Natural killer cell (primary cell): ENCODE measurements at regions of chr2 and their contacts with region 1.

Region 1: DNA sequence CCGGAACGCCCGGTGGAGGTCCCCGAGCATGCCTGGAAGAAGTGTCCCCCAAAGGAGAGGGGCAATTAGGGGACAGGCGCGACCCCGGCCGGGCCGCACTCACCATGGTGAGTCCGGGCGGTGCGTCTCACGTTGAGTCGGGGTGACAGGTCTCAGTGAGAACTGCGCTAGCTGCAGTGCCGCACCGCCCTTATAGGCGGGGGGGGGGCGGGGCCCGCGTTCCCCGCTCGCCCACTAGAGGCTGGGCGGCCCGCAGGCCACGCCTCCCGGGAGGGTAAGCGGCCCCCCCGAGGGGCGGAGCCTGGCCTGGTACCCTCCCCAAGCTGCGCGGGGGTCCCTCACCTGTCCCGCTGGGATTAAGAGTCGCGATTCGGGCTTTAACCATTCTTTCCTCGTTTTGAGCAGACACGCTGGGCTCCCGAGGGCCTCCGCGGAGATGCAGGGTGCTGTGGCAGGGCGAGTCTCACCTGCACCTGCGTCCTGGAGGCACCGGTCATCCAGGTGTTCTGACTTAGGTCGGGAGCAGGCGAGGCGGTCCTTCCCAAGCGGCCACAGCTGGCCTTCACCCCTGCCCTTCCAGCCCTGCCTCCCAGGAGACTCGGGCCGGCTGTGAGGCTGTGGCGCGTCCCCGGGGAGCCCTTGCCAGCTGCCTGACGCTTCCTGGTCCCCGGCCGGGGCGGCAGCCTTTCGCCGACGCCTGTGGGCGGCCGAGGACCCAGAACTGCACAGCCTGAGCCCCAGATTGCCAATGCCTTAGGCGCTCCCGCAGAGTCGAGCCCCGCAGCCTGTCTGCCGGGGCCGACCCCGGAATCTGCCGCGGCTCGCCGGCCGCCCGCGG is at the start of gene TUBA4A:
- DNase-seq: peak; percentile 91 to 95
- ATAC-seq: peak; percentile 78 to 92 (median 86)
- H3K4me3 ChIP-seq: peak within 1 kb of the TSS; percentile 93
- H3K4me3 Mint-ChIP-seq: peak within 1 kb of the TSS; percentile 88
- H3K27ac ChIP-seq: peak within 1 kb of the TSS; percentile 97
- H3K27ac Mint-ChIP-seq: peak within 1 kb of the TSS; percentile 86 to 98
- H3K4me1 ChIP-seq: peaks cover 50% of the 10 kb centered on the region
- H3K4me1 Mint-ChIP-seq: peaks cover 29 to 48% of the 10 kb centered on the region in 2 donors
- H3K27me3 ChIP-seq: no peaks in the 10 kb centered on the region
- H3K27me3 Mint-ChIP-seq: peaks cover 0 to 3% of the 10 kb centered on the region in 2 donors
- CTCF ChIP-seq: no peak
- total RNA-seq, gene TUBA4A: 145 to 188 (median 146) TPM

Region 2: DNA sequence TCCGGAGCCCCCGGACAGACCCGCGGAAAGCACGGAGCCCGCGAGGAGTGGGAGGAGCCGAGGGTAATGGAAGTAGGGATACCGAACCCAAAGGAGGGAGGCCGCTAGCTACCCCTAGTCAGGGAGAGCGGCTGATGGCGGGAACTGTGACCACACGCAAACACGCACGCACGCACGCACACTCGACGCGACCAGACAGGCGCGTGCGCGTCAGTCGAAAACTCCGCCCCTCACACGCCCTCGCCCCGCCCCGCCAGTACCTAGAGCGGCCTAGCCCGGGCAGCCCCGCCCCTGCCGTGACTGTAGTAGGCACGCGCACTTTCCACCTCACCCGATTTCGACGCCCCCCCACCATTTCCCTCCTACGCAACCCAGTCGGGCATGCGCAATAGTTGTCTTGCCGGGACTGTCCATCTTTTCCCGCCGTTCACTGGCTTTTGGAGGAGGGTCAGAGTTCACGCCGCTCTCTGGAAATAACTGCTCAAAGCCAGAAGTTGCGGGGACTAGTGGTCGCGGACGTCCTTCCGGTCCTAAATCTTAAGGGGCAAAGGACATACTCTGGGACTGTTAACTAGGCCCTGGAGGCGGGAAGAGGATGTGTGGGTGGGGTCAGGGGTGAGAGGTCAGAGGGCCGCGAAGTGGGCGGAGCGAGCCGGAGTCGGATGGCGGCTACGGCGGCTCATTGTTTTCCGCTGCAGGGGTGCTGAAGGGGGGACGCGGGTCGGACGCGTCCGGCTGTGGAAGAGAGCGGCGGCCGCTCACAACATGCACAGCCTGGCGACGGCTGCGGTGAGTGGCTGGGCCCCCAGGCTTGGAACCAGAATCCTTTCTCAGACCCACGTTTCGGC is 685.6 kb before region 1 on chr2 and contains the starts of genes CNOT9 and USP37:
- intact Hi-C with region 1: loop called (anchors 5 kb)
- DNase-seq: peak; percentile 99 to 100
- ATAC-seq: peak; percentile 86 to 97 (median 89)
- H3K4me3 ChIP-seq: peak within 1 kb of the TSS; percentile 67
- H3K4me3 Mint-ChIP-seq: peak within 1 kb of the TSS; percentile 99
- H3K27ac ChIP-seq: peak within 1 kb of the TSS; percentile 98
- H3K27ac Mint-ChIP-seq: peak within 1 kb of the TSS; percentile 92 to 95
- H3K4me1 ChIP-seq: peaks cover 27% of the 10 kb centered on the region
- H3K4me1 Mint-ChIP-seq: peaks cover 42 to 67% of the 10 kb centered on the region in 2 donors
- H3K27me3 ChIP-seq: no peaks in the 10 kb centered on the region
- H3K27me3 Mint-ChIP-seq: no peaks in the 10 kb centered on the region
- CTCF ChIP-seq: no peak
- total RNA-seq, gene CNOT9: 61.4 to 66.7 (median 66.3) TPM
- total RNA-seq, gene USP37: 18.3 to 26.2 (median 21.6) TPM

Region 3: DNA sequence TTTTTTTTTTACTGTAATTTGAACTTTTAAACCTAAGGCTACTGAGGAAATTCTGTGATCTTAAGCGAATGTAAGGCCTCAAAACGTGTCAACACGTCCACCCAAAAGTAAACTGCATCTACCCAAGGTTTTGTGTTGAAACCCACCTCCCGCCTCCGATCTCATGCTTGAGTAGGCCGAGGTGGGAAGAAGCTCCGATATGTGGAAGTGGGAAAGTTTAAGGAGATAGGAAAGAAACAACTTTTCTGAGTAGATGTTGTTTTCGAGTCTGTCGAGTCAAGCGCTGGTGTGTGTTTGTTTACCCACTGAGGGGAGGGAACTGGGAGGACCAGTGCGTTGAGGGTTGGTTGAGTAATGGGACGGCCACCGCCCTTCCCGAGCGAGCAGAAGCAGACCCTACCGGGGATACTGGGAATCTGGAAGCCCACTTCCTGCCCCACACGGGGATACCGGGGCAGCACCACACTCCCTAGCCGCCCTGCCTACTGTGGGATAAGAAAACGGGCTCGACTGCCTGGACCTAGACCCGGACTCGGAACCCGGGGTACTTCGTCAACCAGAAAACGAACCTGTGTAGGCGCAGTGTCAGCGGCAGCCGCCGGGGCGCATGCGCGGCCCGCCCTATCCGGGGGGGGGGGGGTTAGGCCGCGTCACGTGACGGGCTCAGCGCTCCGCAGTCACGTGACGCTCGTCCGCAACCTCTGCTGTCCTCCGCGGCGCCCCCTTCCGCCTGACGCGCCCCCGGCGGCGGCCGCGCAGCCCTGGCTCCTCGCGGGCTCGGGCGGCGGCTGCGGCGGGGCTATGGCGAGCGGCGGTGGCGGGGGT is 76.2 kb before region 1 on chr2 and contains the start of gene RETREG2:
- intact Hi-C with region 1: loop called (anchors 2 kb)
- DNase-seq: peak; percentile 79 to 96
- ATAC-seq: peak; percentile 57 to 71 (median 63)
- H3K4me3 ChIP-seq: peak within 1 kb of the TSS; percentile 61
- H3K4me3 Mint-ChIP-seq: peak within 1 kb of the TSS; percentile 97
- H3K27ac ChIP-seq: peak within 1 kb of the TSS; percentile 98
- H3K27ac Mint-ChIP-seq: peak within 1 kb of the TSS; percentile 99 to 100
- H3K4me1 ChIP-seq: peaks cover 43% of the 10 kb centered on the region
- H3K4me1 Mint-ChIP-seq: peaks cover 47 to 67% of the 10 kb centered on the region in 2 donors
- H3K27me3 ChIP-seq: no peaks in the 10 kb centered on the region
- H3K27me3 Mint-ChIP-seq: no peaks in the 10 kb centered on the region
- CTCF ChIP-seq: peak; percentile 38
- total RNA-seq, gene RETREG2: 77.0 to 81.9 (median 79.0) TPM

Region 4: GRCh38 chr2:219207884-219208740 is 45.9 kb before region 1 on chr2:
- intact Hi-C with region 1: no loop called
- DNase-seq: peak in 1 of 2 donors; percentile 15
- ATAC-seq: no peak
- H3K4me3 ChIP-seq: no peak overlapping the region
- H3K4me3 Mint-ChIP-seq: peak overlapping the region; percentile 53
- H3K27ac ChIP-seq: no peak overlapping the region
- H3K27ac Mint-ChIP-seq: peak overlapping the region; percentile 92 to 98
- H3K4me1 ChIP-seq: peaks cover 52% of the 10 kb centered on the region
- H3K4me1 Mint-ChIP-seq: peaks cover 24 to 33% of the 10 kb centered on the region in 2 donors
- H3K27me3 ChIP-seq: no peaks in the 10 kb centered on the region
- H3K27me3 Mint-ChIP-seq: no peaks in the 10 kb centered on the region
- CTCF ChIP-seq: no peak

Region 5: GRCh38 chr2:219229305-219230058 is 24.5 kb before region 1 on chr2 and contains the starts of genes ANKZF1 and ATG9A:
- intact Hi-C with region 1: loop called (anchors 1 kb)
- DNase-seq: peak; percentile 96 to 99
- ATAC-seq: peak; percentile 96 to 99 (median 97)
- H3K4me3 ChIP-seq: peak within 1 kb of the TSS; percentile 88
- H3K4me3 Mint-ChIP-seq: peak within 1 kb of the TSS; percentile 100
- H3K27ac ChIP-seq: peak within 1 kb of the TSS; percentile 88
- H3K27ac Mint-ChIP-seq: peak within 1 kb of the TSS; percentile 99
- H3K4me1 ChIP-seq: peaks cover 34% of the 10 kb centered on the region
- H3K4me1 Mint-ChIP-seq: peaks cover 31 to 54% of the 10 kb centered on the region in 2 donors
- H3K27me3 ChIP-seq: no peaks in the 10 kb centered on the region
- H3K27me3 Mint-ChIP-seq: no peaks in the 10 kb centered on the region
- CTCF ChIP-seq: no peak
- total RNA-seq, gene ANKZF1: 100 to 148 (median 117) TPM
- total RNA-seq, gene ATG9A: 98.1 to 110 (median 108) TPM

Region 6: GRCh38 chr2:219388127-219388844 is 134.3 kb after region 1 on chr2:
- intact Hi-C with region 1: loop called (anchors 1 kb)
- DNase-seq: peak; percentile 98 to 99
- ATAC-seq: peak; percentile 79 to 90 (median 80)
- H3K4me3 ChIP-seq: peak overlapping the region; percentile 12
- H3K4me3 Mint-ChIP-seq: peak overlapping the region; percentile 63
- H3K27ac ChIP-seq: peak overlapping the region; percentile 71
- H3K27ac Mint-ChIP-seq: peak overlapping the region; percentile 92 to 98
- H3K4me1 ChIP-seq: peaks cover 18% of the 10 kb centered on the region
- H3K4me1 Mint-ChIP-seq: peaks cover 4 to 21% of the 10 kb centered on the region in 2 donors
- H3K27me3 ChIP-seq: no peaks in the 10 kb centered on the region
- H3K27me3 Mint-ChIP-seq: peaks cover 0 to 4% of the 10 kb centered on the region in 2 donors
- CTCF ChIP-seq: peak; percentile 61